Activated naive CD4-positive, alpha-beta T cell treated with anti-CD3 and anti-CD28 coated beads for 36 hours (primary cell): ENCODE measurements at regions of chr16 and their contacts with region 1.

Region 1: GRCh38 chr16:23842137-23842600 is 6.4 kb downstream of the PRKCB start:
- DNase-seq: peak; percentile 78
- H3K4me3 Mint-ChIP-seq: no peak overlapping the region
- H3K27ac Mint-ChIP-seq: peak overlapping the region; percentile 56
- H3K4me1 Mint-ChIP-seq: peaks cover 89% of the 10 kb centered on the region
- H3K27me3 Mint-ChIP-seq: no peaks in the 10 kb centered on the region

Region 2: DNA sequence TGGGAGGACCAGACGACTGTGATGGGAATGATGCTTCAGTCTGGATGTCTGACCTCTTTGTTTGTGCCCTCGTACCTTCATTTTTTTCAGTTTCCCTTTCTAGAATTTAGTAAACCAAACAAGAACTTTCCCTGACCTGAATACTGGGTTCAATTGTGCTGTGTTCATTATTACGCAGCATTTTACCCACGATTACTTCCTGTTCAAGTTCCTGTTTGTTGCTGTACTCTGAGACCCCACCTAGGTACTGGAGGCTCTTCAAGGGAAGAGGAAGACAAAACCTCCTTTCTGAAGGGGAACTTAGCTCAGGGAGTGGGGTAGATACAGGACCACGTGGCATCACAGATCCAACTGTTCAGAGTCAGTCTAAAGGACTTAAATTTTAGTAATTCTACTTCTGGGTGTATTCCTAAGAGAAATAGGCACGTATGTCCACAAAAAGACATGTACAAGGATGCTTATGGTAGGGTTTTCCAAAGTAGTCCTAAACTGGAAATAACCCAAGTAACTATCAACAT is 15.6 kb before region 1 on chr16:
- CTCF ChIA-PET with region 1: interaction called, 3 read pairs
- intact Hi-C with region 1: loop called (anchors 1 kb)
- DNase-seq: no peak
- H3K4me3 Mint-ChIP-seq: peak overlapping the region; percentile 17
- H3K27ac Mint-ChIP-seq: peak overlapping the region; percentile 70
- H3K4me1 Mint-ChIP-seq: peaks cover 21% of the 10 kb centered on the region
- H3K27me3 Mint-ChIP-seq: no peaks in the 10 kb centered on the region

Region 3: GRCh38 chr16:23863511-23864422 is 21.6 kb after region 1 on chr16:
- CTCF ChIA-PET with region 1: interaction called, 7 read pairs
- intact Hi-C with region 1: loop called (anchors 1 kb)
- DNase-seq: peak; percentile 34
- H3K4me3 Mint-ChIP-seq: peak overlapping the region; percentile 68
- H3K27ac Mint-ChIP-seq: peak overlapping the region; percentile 83
- H3K4me1 Mint-ChIP-seq: peaks cover 68% of the 10 kb centered on the region
- H3K27me3 Mint-ChIP-seq: no peaks in the 10 kb centered on the region

Region 4: GRCh38 chr16:23952128-23952970 is 110.2 kb after region 1 on chr16:
- CTCF ChIA-PET with region 1: interaction called, 4 read pairs
- intact Hi-C with region 1: loop called (anchors 1 kb)
- DNase-seq: peak; percentile 60
- H3K4me3 Mint-ChIP-seq: peak overlapping the region; percentile 13
- H3K27ac Mint-ChIP-seq: peak overlapping the region; percentile 3
- H3K4me1 Mint-ChIP-seq: peaks cover 78% of the 10 kb centered on the region
- H3K27me3 Mint-ChIP-seq: no peaks in the 10 kb centered on the region

Region 5: DNA sequence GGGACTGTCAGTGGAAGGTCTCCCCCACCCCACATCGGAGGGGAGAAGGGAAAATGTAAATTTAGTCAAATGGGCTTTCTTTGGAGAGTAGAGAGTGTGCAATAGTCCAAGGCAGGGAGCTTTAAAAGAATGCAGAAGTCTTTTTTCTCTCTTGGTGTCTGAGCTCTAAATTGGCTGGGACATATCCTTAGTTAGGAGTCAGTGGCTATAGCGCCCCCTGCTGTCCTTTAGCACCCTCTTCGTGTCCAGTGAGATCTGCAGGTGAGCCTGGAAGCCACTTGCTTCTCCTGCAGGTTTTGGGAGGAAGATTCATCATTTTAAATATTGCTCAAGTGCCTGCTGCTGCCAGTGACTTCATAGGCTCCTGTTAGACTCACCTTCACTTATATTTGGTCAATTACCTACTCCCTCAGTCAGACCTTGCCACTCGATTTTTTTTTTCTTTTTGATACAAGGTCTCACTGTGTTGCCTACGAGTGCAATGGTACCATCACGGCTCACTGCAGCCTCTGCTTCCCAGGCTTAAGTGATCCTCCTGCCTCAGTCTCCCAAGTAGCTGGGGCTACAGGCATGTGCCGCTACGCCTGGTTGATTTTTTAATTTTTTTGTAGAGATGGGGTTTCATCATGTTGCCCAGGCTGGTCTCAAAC is 168.4 kb after region 1 on chr16:
- CTCF ChIA-PET with region 1: interaction called, 5 read pairs
- intact Hi-C with region 1: loop called (anchors 1 kb)
- DNase-seq: peak; percentile 93
- H3K4me3 Mint-ChIP-seq: no peak overlapping the region
- H3K27ac Mint-ChIP-seq: no peak overlapping the region
- H3K4me1 Mint-ChIP-seq: peaks cover 43% of the 10 kb centered on the region
- H3K27me3 Mint-ChIP-seq: no peaks in the 10 kb centered on the region

Region 6: DNA sequence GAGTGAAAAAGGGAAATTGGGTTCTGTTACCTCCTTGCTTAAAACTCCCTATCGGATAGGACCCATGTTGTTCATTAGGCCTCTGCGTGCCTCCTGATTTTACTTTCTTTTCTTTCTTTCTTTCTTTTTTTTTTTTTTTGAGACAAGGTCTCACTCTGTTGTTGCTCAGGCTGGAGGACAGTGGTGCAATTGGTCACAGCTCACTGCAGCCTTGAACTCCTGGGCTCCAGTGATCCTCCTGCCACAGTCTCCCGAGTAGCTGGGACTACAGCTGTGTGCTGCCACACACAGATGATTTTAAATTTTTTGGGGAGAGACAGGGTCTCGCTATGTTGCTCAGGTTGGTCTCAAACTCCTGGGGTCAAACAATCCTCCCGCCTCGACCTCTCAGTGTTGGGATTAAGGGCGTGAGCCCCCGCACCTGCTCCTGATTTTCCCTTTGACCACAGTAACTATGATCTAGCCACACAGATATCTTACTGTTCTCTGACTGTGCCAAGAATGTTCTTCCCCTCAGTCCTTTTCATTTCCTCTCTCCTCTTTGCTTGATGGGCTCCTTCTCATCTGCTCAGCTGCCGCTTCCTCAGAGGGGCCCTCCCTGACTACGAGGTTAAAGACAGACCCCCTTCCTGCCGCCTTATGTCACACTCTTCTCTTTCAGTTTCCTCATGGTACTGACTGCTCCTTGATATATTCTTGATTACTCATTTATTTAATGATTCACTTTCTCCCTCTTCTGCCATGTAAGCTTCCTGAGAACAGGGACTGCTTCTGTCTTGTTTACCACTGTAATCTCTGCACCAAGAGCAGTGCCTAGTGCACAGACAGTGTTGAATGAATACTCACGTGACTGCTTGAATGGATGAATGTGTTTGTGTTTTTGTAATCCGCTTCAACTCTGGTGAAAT is 1313.6 kb after region 1 on chr16:
- CTCF ChIA-PET with region 1: no interaction called
- intact Hi-C with region 1: loop called (anchors 1 kb)
- DNase-seq: peak; percentile 85
- H3K4me3 Mint-ChIP-seq: no peak overlapping the region
- H3K27ac Mint-ChIP-seq: peak overlapping the region; percentile 82
- H3K4me1 Mint-ChIP-seq: peaks cover 19% of the 10 kb centered on the region
- H3K27me3 Mint-ChIP-seq: no peaks in the 10 kb centered on the region